Activated naive CD4-positive, alpha-beta T cell treated with anti-CD3 and anti-CD28 coated beads for 36 hours (primary cell): ENCODE measurements at regions of chr11 and their contacts with region 1.

Region 1: GRCh38 chr11:123062158-123062891 is 389 bp upstream of the HSPA8 start:
- DNase-seq: peak; percentile 100
- H3K4me3 Mint-ChIP-seq: peak overlapping the region; percentile 97
- H3K27ac Mint-ChIP-seq: peak overlapping the region; percentile 99
- H3K4me1 Mint-ChIP-seq: peaks cover 40% of the 10 kb centered on the region
- H3K27me3 Mint-ChIP-seq: no peaks in the 10 kb centered on the region

Region 2: GRCh38 chr11:122697636-122698167 is 364.6 kb before region 1 on chr11:
- CTCF ChIA-PET with region 1: no interaction called
- intact Hi-C with region 1: loop called (anchors 1 kb)
- DNase-seq: peak; percentile 77
- H3K4me3 Mint-ChIP-seq: peak overlapping the region; percentile 50
- H3K27ac Mint-ChIP-seq: peak overlapping the region; percentile 78
- H3K4me1 Mint-ChIP-seq: peaks cover 77% of the 10 kb centered on the region
- H3K27me3 Mint-ChIP-seq: no peaks in the 10 kb centered on the region

Region 3: GRCh38 chr11:123083623-123084029 is 21.3 kb after region 1 on chr11:
- CTCF ChIA-PET with region 1: interaction called, 8 read pairs
- intact Hi-C with region 1: loop called (anchors 1 kb)
- DNase-seq: peak; percentile 92
- H3K4me3 Mint-ChIP-seq: peak overlapping the region; percentile 45
- H3K27ac Mint-ChIP-seq: peak overlapping the region; percentile 73
- H3K4me1 Mint-ChIP-seq: peaks cover 71% of the 10 kb centered on the region
- H3K27me3 Mint-ChIP-seq: no peaks in the 10 kb centered on the region

Region 4: GRCh38 chr11:123145220-123145619 is 82.9 kb after region 1 on chr11:
- CTCF ChIA-PET with region 1: no interaction called
- intact Hi-C with region 1: no loop called
- DNase-seq: no peak
- H3K4me3 Mint-ChIP-seq: no peak overlapping the region
- H3K27ac Mint-ChIP-seq: no peak overlapping the region
- H3K4me1 Mint-ChIP-seq: no peaks in the 10 kb centered on the region
- H3K27me3 Mint-ChIP-seq: peaks cover 2% of the 10 kb centered on the region

Region 5: GRCh38 chr11:123166071-123166559 is 103.8 kb after region 1 on chr11:
- CTCF ChIA-PET with region 1: no interaction called
- intact Hi-C with region 1: no loop called
- DNase-seq: peak; percentile 46
- H3K4me3 Mint-ChIP-seq: no peak overlapping the region
- H3K27ac Mint-ChIP-seq: no peak overlapping the region
- H3K4me1 Mint-ChIP-seq: no peaks in the 10 kb centered on the region
- H3K27me3 Mint-ChIP-seq: no peaks in the 10 kb centered on the region

Region 6: DNA sequence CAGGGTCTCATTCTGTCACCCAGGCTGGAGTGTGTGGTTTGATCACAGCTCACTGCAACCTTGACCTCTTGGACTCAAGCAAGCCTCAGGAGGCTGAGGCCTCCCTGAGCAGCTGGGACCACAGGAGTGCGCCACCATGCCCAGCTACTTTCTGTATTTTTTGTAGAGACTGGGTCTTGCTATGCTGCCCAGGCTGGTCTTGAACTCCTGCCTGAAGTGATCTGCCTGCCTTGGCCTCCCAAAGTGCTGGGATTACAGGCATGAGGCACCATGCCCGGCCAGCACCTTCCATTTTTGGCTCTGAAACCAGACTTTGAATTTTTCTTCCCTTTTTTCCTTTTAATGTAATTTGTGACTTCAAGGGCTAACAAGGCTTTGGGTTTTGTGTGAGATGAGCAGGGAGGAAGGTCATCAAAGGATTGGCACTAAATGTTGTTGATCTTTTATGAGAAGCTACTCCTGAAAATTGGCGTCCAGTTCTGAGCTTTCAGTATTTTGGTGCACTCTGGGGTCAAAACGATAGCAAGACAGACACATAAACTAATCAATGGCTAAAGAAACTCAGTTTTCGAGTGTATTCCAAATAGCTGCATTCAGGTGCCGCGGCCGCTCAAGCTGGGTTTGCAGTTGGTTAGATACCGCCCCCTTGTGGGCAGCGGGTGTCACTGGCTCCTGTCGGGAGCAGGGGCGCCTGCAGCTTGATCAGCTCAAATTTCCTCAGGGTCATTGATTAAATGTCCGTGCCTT is 184.6 kb after region 1 on chr11:
- CTCF ChIA-PET with region 1: interaction called, 5 read pairs
- intact Hi-C with region 1: loop called (anchors 1 kb)
- DNase-seq: peak; percentile 92
- H3K4me3 Mint-ChIP-seq: no peak overlapping the region
- H3K27ac Mint-ChIP-seq: no peak overlapping the region
- H3K4me1 Mint-ChIP-seq: peaks cover 5% of the 10 kb centered on the region
- H3K27me3 Mint-ChIP-seq: peaks cover 2% of the 10 kb centered on the region

Region 7: GRCh38 chr11:123381817-123382554 is 319.7 kb after region 1 on chr11:
- CTCF ChIA-PET with region 1: no interaction called
- intact Hi-C with region 1: loop called (anchors 1 kb)
- DNase-seq: peak; percentile 85
- H3K4me3 Mint-ChIP-seq: peak overlapping the region; percentile 58
- H3K27ac Mint-ChIP-seq: peak overlapping the region; percentile 78
- H3K4me1 Mint-ChIP-seq: peaks cover 18% of the 10 kb centered on the region
- H3K27me3 Mint-ChIP-seq: peaks cover 6% of the 10 kb centered on the region

Region 8: GRCh38 chr11:124739479-124740276 is 1677.4 kb after region 1 on chr11 and contains the start of gene NRGN:
- CTCF ChIA-PET with region 1: no interaction called
- intact Hi-C with region 1: loop called (anchors 10 kb)
- DNase-seq: peak; percentile 90
- H3K4me3 Mint-ChIP-seq: peak within 1 kb of the TSS; percentile 77
- H3K27ac Mint-ChIP-seq: no peak within 1 kb of the TSS
- H3K4me1 Mint-ChIP-seq: peaks cover 8% of the 10 kb centered on the region
- H3K27me3 Mint-ChIP-seq: peaks cover 2% of the 10 kb centered on the region
- total RNA-seq, gene NRGN: 10.3 to 10.8 TPM